CD8-positive, alpha-beta memory T cell (primary cell): ENCODE measurements at regions of chr9 and their contacts with region 1.

Region 1: GRCh38 chr9:33404788-33405362 is 2.5 kb upstream of the AQP7 start:
- DNase-seq: no peak
- H3K4me3 ChIP-seq: no peak overlapping the region
- H3K4me3 Mint-ChIP-seq: no peak overlapping the region
- H3K27ac ChIP-seq: no peak overlapping the region
- H3K27ac Mint-ChIP-seq: peak overlapping the region in 4 of 8 donors; percentile 40 to 76 (median 51)
- H3K4me1 ChIP-seq: no peaks in the 10 kb centered on the region
- H3K4me1 Mint-ChIP-seq: no peaks in the 10 kb centered on the region
- H3K27me3 ChIP-seq: no peaks in the 10 kb centered on the region
- H3K27me3 Mint-ChIP-seq: peaks cover 0 to 4% of the 10 kb centered on the region in 2 donors

Region 2: DNA sequence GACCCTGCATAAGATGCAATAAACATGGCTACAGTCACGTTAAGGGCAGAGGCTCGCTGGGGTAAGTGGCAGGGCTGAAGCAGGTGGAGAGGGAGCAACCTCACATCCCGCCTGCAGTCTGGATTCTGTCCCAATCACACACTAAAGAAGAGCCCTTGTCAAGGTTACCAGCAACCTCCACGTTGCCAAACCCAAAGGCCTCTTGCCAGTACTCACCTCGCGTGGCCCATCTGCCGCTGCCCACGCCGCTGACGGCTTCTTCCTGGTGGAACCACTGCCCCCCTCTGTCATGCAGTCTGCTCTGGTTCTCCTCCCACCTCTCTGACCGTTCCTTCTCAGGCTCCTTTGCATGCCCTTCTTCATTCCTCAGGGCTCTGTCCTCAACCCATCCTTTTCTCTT is 11.3 kb before region 1 on chr9:
- CTCF ChIA-PET with region 1: no interaction called
- POLR2A ChIA-PET with region 1: no interaction called
- DNase-seq: no peak
- H3K4me3 ChIP-seq: no peak overlapping the region
- H3K4me3 Mint-ChIP-seq: no peak overlapping the region
- H3K27ac ChIP-seq: no peak overlapping the region
- H3K27ac Mint-ChIP-seq: peak overlapping the region in 2 of 8 donors; percentile 40 to 65
- H3K4me1 ChIP-seq: no peaks in the 10 kb centered on the region
- H3K4me1 Mint-ChIP-seq: no peaks in the 10 kb centered on the region
- H3K27me3 ChIP-seq: no peaks in the 10 kb centered on the region
- H3K27me3 Mint-ChIP-seq: peaks cover 4 to 14% of the 10 kb centered on the region in 2 donors

Region 3: DNA sequence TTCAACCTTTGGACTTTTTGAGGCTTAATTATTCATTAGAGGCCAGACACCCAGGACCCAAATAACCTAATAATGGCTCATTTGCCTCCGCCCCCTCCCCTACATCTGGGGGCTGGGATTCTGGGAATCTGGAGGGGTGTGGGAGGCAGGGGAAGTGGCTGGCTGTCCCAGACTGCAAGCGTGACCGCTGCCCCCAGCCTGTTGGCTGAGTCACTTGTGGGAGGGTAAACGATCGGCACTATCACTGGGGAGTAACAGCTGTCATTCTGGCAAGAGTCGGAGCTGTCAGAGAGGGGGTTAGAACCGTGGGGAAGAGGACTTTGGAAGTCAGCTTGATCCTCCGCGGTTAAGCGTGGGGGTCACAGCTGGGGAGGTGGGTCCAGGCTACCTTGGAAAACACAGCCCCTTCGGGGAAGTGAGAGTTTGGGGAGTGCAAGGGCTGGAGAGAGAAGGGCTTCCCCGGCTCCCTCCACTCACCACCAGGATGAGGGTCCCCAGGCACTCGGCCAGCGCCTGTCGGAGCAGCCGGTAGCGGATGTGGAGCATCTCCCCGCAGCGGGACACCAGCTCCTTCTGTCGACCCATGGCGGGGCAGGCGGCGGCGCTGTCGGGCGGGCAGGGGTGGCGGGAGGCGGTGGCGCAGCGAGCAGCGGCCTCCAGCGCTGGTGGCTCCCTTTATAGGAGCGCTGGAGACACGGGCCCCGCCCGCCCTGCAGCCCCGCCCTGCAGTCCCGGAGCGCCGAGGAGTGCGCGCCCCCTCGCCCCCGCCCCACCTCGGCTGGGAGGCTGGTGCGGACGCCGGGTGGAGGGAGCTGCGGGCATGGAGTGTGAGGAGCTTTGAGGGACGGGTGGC is 42.3 kb after region 1 on chr9 and contains the start of gene AQP3:
- CTCF ChIA-PET with region 1: interaction called, 35 read pairs
- POLR2A ChIA-PET with region 1: interaction called, 3 read pairs
- DNase-seq: peak; percentile 51 to 80 (median 72)
- H3K4me3 ChIP-seq: peak within 1 kb of the TSS; percentile 99
- H3K4me3 Mint-ChIP-seq: peak within 1 kb of the TSS; percentile 85 to 99 (median 88)
- H3K27ac ChIP-seq: peak within 1 kb of the TSS; percentile 86
- H3K27ac Mint-ChIP-seq: peak within 1 kb of the TSS; percentile 87 to 100 (median 97)
- H3K4me1 ChIP-seq: peaks cover 35% of the 10 kb centered on the region
- H3K4me1 Mint-ChIP-seq: peaks cover 38 to 62% (median 47%) of the 10 kb centered on the region in 3 donors
- H3K27me3 ChIP-seq: no peaks in the 10 kb centered on the region
- H3K27me3 Mint-ChIP-seq: no peaks in the 10 kb centered on the region
- total RNA-seq, gene AQP3: 8.7 to 9.3 TPM

Region 4: DNA sequence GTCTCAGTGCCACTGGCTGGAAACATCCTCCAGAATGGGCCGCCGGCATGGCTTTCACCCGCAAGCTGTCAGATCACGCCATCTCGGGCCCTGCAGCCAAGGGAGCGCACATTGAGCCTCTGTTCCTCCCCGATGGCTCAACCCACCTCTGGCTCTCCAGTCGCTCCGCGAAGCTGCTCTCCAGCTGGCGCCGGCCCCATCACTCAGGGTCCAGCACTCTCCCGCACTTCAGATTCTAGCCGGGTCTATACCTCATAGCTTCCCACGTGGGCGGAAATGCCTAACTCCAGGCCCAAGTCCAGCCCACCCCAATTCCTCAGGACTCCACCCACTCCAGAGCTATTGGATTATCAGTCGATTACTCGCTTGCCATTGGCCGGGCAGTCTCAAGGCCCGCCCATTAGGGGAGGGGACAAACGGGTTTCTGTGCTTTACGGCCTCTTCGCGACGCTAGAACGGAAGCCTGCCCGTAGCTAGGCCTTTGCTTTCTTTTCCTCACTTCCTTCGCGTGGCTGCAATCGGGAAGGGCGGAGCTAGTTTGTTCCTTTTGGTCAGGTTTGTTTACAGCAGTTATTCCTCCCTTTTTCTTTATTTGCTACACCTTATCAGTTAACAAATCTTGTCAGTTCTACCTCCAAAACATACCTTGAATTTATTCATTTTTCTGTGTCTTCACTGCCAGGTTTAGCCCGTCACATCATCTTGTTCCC is 68.9 kb after region 1 on chr9 and contains the start of gene NOL6:
- CTCF ChIA-PET with region 1: interaction called, 105 read pairs
- POLR2A ChIA-PET with region 1: no interaction called
- DNase-seq: peak; percentile 94 to 99 (median 98)
- H3K4me3 ChIP-seq: peak within 1 kb of the TSS; percentile 76
- H3K4me3 Mint-ChIP-seq: peak within 1 kb of the TSS; percentile 88 to 100 (median 99)
- H3K27ac ChIP-seq: peak within 1 kb of the TSS; percentile 45
- H3K27ac Mint-ChIP-seq: peak within 1 kb of the TSS; percentile 64 to 99 (median 97)
- H3K4me1 ChIP-seq: peaks cover 22% of the 10 kb centered on the region
- H3K4me1 Mint-ChIP-seq: peaks cover 26 to 32% (median 31%) of the 10 kb centered on the region in 3 donors
- H3K27me3 ChIP-seq: no peaks in the 10 kb centered on the region
- H3K27me3 Mint-ChIP-seq: no peaks in the 10 kb centered on the region
- total RNA-seq, gene NOL6: 90.8 to 93.0 TPM

Region 5: DNA sequence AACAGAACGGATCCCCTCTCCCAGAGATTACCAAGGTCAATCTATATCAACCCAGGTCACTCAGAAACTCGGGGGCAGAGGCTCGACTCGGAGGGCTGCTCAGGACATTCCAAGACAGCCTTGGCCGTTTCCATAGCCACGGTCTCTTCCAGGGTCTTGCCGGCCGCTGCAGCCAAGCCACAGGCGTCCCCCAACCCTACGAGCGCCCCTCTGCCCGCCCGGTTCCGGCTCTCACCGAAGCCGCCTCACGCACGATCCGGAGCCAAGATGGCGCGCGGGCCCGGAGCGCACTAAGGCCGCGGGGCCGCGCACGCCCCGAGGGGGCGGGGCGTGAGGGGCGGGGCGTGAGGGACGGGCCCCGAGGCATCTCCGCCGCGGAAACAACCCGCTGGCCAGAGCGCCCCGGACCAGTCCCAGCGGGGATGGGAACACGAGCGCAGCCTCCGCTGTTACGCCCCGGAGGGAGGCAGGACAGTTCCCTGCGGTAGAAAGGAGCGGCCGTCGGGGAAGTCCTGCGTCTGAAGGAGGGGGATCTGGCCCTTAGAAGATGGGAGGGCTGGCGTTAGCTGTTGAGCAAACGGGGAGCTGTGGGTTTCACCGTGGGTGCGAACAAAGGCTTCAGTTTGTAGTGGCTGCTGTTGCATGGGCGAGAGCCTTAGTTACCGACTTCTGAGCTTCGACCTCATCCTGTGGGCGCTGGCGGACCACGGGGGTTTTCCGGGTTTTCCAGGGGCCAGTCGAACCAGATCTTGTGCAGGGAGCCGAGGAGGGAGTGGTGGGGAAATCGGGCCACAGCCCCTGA is 1207.2 kb after region 1 on chr9 and contains the start of gene RPP25L:
- CTCF ChIA-PET with region 1: no interaction called
- POLR2A ChIA-PET with region 1: no interaction called
- DNase-seq: peak; percentile 79 to 88 (median 86)
- H3K4me3 ChIP-seq: peak within 1 kb of the TSS; percentile 90
- H3K4me3 Mint-ChIP-seq: peak within 1 kb of the TSS; percentile 85 to 94 (median 88)
- H3K27ac ChIP-seq: peak within 1 kb of the TSS; percentile 85
- H3K27ac Mint-ChIP-seq: peak within 1 kb of the TSS; percentile 88 to 99 (median 93)
- H3K4me1 ChIP-seq: peaks cover 22% of the 10 kb centered on the region
- H3K4me1 Mint-ChIP-seq: peaks cover 22 to 32% (median 26%) of the 10 kb centered on the region in 3 donors
- H3K27me3 ChIP-seq: no peaks in the 10 kb centered on the region
- H3K27me3 Mint-ChIP-seq: peaks cover 0 to 2% of the 10 kb centered on the region in 2 donors
- total RNA-seq, gene RPP25L: 34.5 to 39.0 TPM